HCT116 (cell line): ENCODE measurements at regions of chr3 and their contacts with region 1.

Region 1: GRCh38 chr3:86856711-86857110 is 134.2 kb downstream of the VGLL3 start:
- DNase-seq: no peak
- ATAC-seq: no peak
- H3K4me3 ChIP-seq: no peak overlapping the region
- H3K27ac ChIP-seq: no peak overlapping the region
- H3K4me1 ChIP-seq: no peaks in the 10 kb centered on the region
- H3K27me3 ChIP-seq: no peaks in the 10 kb centered on the region
- CTCF ChIP-seq: no peak
- POLR2A ChIP-seq: no peak
- RAD21 ChIP-seq: no peak

Region 2: GRCh38 chr3:85912980-85913379 is 943.7 kb before region 1 on chr3:
- CTCF ChIA-PET with region 1: no interaction called
- POLR2A ChIA-PET with region 1: no interaction called
- RAD21 ChIA-PET with region 1: no interaction called
- intact Hi-C with region 1: no loop called
- DNase-seq: no peak
- ATAC-seq: no peak
- H3K4me3 ChIP-seq: no peak overlapping the region
- H3K27ac ChIP-seq: no peak overlapping the region
- H3K4me1 ChIP-seq: no peaks in the 10 kb centered on the region
- H3K27me3 ChIP-seq: no peaks in the 10 kb centered on the region
- CTCF ChIP-seq: no peak
- POLR2A ChIP-seq: no peak
- RAD21 ChIP-seq: no peak

Region 3: DNA sequence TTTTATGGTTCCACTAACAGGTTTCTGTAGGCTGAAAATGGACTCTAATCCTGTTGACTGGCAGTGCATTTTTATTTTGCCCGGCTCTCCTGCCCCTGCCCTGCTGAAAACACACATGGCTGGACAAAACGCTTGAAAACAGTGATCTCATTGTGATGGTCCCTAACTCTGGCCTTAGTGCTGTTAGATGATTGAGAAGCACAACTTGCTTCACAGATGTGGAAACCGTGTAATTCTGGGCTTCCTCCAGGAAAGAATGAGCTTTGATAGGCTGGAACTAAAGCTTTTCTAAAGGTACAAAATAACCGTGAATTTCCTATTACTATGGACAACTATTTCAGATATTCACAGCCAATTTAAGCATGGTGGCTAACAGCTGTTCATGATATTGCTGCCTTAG is 12.9 kb after region 1 on chr3:
- CTCF ChIA-PET with region 1: no interaction called
- POLR2A ChIA-PET with region 1: no interaction called
- RAD21 ChIA-PET with region 1: no interaction called
- intact Hi-C with region 1: loop called (anchors 2 kb)
- DNase-seq: no peak
- ATAC-seq: no peak
- H3K4me3 ChIP-seq: no peak overlapping the region
- H3K27ac ChIP-seq: no peak overlapping the region
- H3K4me1 ChIP-seq: no peaks in the 10 kb centered on the region
- H3K27me3 ChIP-seq: no peaks in the 10 kb centered on the region
- CTCF ChIP-seq: no peak
- POLR2A ChIP-seq: no peak
- RAD21 ChIP-seq: no peak